HEK293T (cell line): ENCODE measurements at regions of chr12 and their contacts with region 1.

Region 1: DNA sequence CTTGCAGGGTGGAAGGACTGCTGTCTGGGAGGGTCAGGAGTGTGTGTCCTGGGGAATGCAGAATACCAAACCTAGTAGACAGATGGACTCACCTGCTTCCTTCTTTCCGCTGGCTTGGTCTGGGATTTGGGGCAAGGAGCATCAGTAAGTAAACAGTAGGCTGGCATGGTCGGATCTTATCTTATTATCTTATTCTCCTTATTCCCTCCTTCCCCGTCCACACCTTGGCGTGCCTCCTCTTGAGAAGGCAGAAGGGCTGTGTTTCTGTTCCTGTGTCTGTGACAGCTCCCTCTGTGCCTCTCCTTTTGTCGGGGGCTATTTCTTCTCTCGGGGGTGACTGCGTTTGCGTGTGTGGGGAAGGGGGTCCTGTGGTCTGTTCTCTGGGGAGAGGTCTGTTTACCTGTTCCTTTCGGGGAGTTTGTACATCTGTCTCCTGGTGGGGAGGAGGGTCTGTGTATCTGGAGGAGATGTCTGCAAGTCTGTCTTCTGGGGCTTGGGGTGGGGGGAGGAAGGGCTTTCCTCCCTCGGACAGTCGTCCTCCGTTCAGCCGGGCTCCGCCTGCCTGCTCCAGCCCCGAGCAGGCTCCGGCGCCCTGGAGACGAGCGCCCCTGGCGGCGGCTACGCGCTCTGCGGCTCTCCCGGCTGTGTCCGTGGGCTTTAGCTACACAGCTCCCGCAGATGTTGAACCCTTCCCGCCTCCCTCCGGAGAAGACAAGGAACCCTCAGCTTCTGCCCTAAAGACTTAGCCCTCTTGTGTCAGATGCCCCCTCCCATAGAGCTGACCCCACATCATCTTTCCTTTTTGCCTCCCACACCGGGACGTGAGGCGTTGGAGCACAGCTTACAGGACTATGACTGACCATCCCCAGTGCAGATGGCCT is 4.3 kb downstream of the KRT86 start:
- DNase-seq: peak; percentile 93

Region 2: DNA sequence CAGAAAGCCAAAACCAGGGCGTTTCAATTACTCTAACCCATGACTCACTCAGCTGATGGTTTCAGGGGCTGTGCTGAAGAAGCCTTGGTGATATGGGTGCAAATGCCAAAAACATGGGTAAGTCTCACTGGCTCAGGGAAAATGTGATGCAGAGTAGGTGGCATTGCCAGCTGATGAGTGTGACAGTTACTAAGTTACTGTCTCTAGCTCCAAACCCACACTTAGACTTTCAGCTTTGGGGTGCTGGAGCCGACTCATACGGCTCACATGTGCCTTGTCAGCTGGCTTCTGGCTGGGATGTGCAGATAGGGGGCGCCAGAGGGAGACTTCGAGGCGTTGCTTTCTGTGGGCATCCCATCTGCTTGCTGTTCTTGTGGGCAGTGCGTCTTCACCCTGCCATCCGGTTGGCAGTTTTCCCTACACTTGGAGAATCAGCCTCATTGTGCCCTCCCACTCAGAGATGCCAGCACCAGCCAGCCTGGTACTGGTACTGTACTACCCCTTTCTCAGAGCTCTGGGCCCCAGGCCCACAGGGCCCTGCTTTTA is 56.8 kb before region 1 on chr12:
- CTCF ChIA-PET with region 1: interaction called, 25 read pairs
- POLR2A ChIA-PET with region 1: no interaction called
- DNase-seq: peak; percentile 57

Region 3: GRCh38 chr12:52235822-52236692 is 42.7 kb before region 1 on chr12:
- CTCF ChIA-PET with region 1: interaction called, 17 read pairs
- POLR2A ChIA-PET with region 1: no interaction called
- DNase-seq: no peak

Region 4: DNA sequence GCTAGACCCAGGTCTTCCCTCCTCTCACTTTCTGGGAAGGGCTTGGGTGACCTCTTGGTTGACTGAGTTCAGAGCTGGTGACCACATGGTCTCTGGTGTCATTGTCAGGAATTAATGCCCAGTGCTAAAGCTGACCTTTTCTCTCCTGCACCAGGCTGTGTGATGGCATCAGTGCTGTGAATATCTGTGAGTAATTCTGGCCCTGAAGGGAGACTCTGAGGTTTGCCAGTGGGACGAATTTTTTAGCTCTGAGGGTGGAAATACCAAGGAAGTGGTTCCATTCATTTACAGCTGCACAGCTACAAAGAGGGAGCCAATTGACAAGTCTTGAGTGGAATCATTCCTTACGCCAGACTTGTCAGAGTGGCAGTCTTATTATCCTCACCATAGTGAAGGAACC is 10.6 kb before region 1 on chr12:
- CTCF ChIA-PET with region 1: interaction called, 25 read pairs
- POLR2A ChIA-PET with region 1: no interaction called
- DNase-seq: no peak

Region 5: DNA sequence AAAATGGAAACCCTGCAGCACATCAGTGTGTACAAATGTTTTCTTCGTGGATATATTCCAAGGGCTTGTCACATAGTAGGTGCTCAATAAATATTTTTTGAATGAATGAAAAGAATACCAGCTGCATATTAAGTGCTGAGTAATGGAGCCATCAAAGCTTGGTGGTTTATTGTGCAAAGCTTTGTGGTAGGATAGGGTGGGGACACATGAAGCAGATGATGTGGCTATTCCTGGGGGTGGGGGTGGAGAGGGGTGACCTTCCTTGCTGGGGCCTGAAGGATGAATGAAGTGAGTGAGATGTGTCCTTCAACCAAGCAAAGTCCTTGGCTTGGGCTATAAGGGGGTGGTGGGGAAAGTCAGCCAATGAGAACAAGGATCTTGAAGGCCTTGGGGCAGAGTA is 16.9 kb after region 1 on chr12:
- CTCF ChIA-PET with region 1: interaction called, 14 read pairs
- POLR2A ChIA-PET with region 1: no interaction called
- DNase-seq: no peak

Region 6: GRCh38 chr12:52496590-52497071 is 217.8 kb after region 1 on chr12:
- CTCF ChIA-PET with region 1: no interaction called
- POLR2A ChIA-PET with region 1: no interaction called
- DNase-seq: no peak

Region 7: DNA sequence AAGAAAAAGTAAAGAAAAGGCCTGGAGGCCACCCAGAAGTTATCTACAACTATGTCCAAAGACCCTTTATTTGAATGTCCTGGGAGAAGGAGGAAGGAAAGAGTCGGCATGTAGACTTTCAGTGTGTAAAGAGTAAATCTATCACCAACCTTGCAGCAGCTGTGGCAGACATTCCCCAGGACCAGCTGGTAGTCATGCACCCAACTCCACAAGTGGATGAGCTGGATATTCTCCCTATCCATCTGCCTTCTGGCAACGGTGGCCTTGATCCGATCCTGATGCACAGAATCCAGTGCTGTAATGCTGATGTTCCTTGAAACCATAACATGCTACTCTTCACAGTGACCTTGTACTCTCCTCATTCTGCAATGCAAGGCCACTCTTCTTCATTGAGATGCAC is 471.0 kb after region 1 on chr12:
- CTCF ChIA-PET with region 1: no interaction called
- POLR2A ChIA-PET with region 1: no interaction called
- DNase-seq: no peak